AG04449 (cell line): ENCODE measurements at regions of chr12 and their contacts with region 1.

Region 1: GRCh38 chr12:49580572-49581535 is 12.9 kb upstream of the MCRS1 start:
- DNase-seq: peak; percentile 9
- H3K4me3 ChIP-seq: no peak overlapping the region
- CTCF ChIP-seq: peak; percentile 93

Region 2: DNA sequence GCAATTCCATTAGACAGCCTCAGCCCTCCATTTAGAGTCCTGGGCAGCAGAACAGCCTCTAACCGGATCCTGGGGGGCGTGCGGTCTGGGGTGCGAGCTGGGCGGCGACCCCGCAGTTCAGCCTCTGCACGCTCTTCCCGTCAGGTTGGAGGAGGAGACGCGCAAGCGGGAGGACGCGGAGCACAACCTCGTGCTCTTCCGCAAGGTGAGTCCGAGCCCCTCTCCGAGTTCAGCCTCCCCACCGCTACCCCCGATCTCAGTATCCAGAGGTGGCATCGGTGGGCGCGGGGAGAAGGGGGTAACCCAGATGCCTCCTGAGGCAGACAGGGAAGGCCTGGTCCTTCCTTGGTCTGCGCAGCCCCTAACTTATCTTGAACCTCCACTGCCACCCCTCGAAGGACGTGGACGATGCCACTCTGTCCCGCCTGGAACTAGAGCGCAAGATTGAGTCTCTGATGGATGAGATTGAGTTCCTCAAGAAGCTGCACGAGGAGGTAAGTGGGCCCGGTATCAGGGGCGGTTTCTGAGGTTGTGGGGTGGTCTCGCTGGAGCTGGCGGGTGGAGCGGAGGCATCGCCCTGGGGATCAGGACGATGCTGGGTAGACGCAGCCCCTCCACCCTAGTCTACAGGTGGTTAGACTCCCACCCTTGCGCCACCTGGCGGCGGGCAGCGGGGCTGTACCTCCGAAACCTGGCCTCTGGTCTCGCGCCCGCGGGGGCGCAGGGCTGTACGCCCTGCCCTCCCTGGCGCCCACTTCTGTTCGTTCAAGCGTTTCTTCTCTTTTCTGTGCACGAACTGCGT is 284.6 kb before region 1 on chr12:
- CTCF ChIA-PET with region 1: interaction called, 13 read pairs
- POLR2A ChIA-PET with region 1: no interaction called
- DNase-seq: no peak
- H3K4me3 ChIP-seq: no peak overlapping the region
- CTCF ChIP-seq: peak; percentile 74

Region 3: GRCh38 chr12:49342066-49342913 is 238.6 kb before region 1 on chr12:
- CTCF ChIA-PET with region 1: interaction called, 39 read pairs
- POLR2A ChIA-PET with region 1: no interaction called
- DNase-seq: no peak
- H3K4me3 ChIP-seq: peak overlapping the region; percentile 45
- CTCF ChIP-seq: peak; percentile 67

Region 4: GRCh38 chr12:49553512-49554088 is 27.3 kb before region 1 on chr12:
- CTCF ChIA-PET with region 1: interaction called, 44 read pairs
- POLR2A ChIA-PET with region 1: no interaction called
- DNase-seq: no peak
- H3K4me3 ChIP-seq: no peak overlapping the region
- CTCF ChIP-seq: peak; percentile 16

Region 5: DNA sequence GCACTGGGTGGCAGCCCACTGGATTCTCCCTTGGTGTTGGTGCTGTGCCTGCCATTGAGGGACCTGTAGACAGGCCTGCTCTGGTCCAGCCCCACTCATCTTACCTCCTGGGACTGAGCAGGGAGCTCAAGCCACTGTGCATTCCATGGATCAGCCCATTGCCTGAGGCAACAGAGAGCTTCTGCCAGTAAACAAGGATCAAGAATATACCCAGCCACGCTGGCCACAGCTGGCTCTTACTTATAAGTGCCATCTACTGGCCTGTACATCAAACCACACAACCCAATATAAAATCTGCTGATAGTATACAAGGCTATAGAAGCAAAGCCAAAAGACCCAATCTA is 28.9 kb after region 1 on chr12:
- CTCF ChIA-PET with region 1: interaction called, 23 read pairs
- POLR2A ChIA-PET with region 1: no interaction called
- DNase-seq: no peak
- H3K4me3 ChIP-seq: no peak overlapping the region
- CTCF ChIP-seq: no peak